ENCODE measurements at regions of chr2 and their contacts with region 1.

Region 1: DNA sequence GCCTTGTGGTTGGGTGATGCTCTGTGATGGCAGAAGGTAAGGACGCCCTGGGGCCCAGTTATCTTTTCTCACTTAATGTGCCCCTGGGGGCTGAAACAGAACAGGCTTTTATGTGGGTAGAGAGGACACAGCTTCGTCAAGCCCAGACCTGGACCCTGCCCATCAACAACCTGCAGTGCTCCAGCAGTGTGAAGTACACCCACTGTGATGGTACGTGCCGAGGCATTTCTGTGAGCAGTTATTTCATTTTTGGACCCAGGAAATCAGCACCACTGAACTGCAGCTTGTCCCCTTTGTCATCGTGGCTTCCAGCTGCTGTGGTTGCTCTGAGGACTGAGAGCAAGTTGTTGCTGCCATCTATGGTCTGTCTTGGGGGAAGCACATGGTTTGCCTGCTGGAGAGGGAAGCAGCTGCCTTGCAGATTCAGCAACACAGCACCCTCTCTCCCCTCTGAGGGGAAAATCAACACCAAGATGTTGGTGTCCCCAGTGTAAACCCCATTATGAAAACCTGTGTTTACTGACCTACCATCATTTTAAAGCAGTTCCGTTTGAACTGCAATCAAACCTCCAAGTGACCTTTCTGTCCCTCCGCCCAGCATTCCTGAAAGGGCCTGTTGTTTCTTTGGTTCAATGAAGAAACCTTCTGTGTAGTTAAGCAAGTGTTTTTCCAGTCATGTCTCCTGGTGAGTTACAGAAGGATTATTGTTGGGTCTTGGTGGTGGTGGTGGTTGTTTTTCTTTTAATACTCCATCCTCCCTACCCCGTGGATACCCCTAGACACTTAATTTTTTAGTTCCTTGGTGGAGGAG is 158.2 kb downstream of the MGAT5 start:
- DNase-seq: peak; percentile 78
- H3K4me3 Mint-ChIP-seq: no peak overlapping the region
- H3K27ac Mint-ChIP-seq: no peak overlapping the region
- H3K4me1 Mint-ChIP-seq: peaks cover 35% of the 10 kb centered on the region
- H3K27me3 Mint-ChIP-seq: no peaks in the 10 kb centered on the region

Region 2: GRCh38 chr2:133886735-133887660 is 525.0 kb before region 1 on chr2:
- CTCF ChIA-PET with region 1: interaction called, 28 read pairs
- POLR2A ChIA-PET with region 1: no interaction called
- intact Hi-C with region 1: loop called (anchors 2 kb)
- DNase-seq: peak; percentile 61
- H3K4me3 Mint-ChIP-seq: no peak overlapping the region
- H3K27ac Mint-ChIP-seq: no peak overlapping the region
- H3K4me1 Mint-ChIP-seq: no peaks in the 10 kb centered on the region
- H3K27me3 Mint-ChIP-seq: peaks cover 5% of the 10 kb centered on the region

Region 3: DNA sequence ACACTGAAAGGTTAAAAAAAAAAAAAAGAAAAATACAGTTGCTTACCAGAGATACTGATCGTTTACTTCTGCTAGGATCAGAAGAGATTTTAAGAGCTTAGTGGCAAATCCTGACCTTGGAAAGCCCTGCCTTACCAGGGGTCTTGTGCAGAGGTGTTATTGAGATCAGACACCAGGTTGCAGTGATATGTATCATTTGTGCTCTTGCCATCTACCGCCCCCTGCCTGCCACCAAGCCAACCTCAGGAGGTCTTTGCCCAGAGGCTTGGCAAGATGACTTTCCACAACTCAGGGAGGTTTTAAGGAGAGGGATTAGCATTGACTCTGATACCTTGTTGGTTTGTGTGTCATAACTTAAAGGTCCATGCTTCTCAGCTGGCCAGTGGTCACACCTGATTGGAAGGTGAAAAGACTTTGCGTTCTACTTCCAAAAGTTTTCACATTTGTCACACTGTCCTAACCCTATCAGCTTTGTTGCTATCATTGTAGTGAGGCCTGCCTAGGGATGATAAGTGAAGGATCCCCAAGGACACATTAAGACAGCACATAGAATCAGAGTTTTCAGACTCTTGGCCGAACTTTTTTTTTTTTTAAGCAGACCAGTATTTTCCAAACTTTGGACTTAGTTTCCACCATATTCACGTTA is 204.3 kb before region 1 on chr2:
- CTCF ChIA-PET with region 1: interaction called, 26 read pairs
- POLR2A ChIA-PET with region 1: no interaction called
- intact Hi-C with region 1: no loop called
- DNase-seq: peak; percentile 76
- H3K4me3 Mint-ChIP-seq: no peak overlapping the region
- H3K27ac Mint-ChIP-seq: no peak overlapping the region
- H3K4me1 Mint-ChIP-seq: peaks cover 14% of the 10 kb centered on the region
- H3K27me3 Mint-ChIP-seq: no peaks in the 10 kb centered on the region

Region 4: DNA sequence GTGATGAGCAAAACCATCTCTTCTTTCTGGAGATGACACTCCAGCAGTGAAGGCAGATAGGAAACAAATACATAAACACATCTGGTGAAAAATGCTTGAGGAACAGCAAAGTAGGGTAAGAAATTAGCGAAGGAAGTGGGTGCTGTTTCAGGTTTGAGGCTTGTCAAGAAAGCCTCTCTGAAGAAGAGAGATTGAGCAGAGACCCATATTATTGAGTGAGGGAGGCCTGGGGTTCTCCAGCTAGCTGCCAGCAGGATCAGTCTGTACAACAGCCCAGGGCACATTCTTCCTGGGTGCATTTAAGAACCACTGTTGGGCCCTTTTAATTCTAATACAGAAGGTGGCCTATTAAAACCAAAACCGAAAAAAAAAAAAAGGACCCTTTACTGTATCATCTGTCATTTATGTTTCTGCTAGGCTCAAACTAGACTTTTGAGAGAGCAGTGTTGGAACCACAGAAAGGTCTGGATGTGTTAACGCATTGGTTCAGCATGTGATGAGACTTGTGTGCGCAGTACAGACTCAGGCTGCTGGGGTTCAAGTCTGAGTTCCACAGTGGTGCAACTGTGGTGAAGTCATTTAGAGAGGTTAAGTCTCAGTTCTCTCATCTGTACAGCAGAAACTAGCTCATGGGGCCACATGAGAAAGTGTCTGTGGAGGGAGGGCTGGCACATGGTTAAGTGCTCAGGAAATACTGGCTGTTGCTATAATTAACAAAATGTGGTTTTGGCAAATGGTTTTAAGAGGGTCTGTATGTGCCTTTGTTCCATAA is 129.2 kb before region 1 on chr2:
- CTCF ChIA-PET with region 1: interaction called, 10 read pairs
- POLR2A ChIA-PET with region 1: no interaction called
- intact Hi-C with region 1: no loop called
- DNase-seq: peak; percentile 73
- H3K4me3 Mint-ChIP-seq: no peak overlapping the region
- H3K27ac Mint-ChIP-seq: peak overlapping the region; percentile 21
- H3K4me1 Mint-ChIP-seq: peaks cover 42% of the 10 kb centered on the region
- H3K27me3 Mint-ChIP-seq: no peaks in the 10 kb centered on the region

Region 5: GRCh38 chr2:134398300-134398699 is 13.7 kb before region 1 on chr2:
- CTCF ChIA-PET with region 1: interaction called, 11 read pairs
- POLR2A ChIA-PET with region 1: no interaction called
- intact Hi-C with region 1: no loop called
- DNase-seq: no peak
- H3K4me3 Mint-ChIP-seq: no peak overlapping the region
- H3K27ac Mint-ChIP-seq: no peak overlapping the region
- H3K4me1 Mint-ChIP-seq: no peaks in the 10 kb centered on the region
- H3K27me3 Mint-ChIP-seq: no peaks in the 10 kb centered on the region